Posterior vena cava (tissue), 2 donors: ENCODE measurements at regions of chr18 and their contacts with region 1.

Region 1: GRCh38 chr18:10519999-10520935 is 5.6 kb upstream of the NAPG start:
- DNase-seq: peak; percentile 95

Region 2: DNA sequence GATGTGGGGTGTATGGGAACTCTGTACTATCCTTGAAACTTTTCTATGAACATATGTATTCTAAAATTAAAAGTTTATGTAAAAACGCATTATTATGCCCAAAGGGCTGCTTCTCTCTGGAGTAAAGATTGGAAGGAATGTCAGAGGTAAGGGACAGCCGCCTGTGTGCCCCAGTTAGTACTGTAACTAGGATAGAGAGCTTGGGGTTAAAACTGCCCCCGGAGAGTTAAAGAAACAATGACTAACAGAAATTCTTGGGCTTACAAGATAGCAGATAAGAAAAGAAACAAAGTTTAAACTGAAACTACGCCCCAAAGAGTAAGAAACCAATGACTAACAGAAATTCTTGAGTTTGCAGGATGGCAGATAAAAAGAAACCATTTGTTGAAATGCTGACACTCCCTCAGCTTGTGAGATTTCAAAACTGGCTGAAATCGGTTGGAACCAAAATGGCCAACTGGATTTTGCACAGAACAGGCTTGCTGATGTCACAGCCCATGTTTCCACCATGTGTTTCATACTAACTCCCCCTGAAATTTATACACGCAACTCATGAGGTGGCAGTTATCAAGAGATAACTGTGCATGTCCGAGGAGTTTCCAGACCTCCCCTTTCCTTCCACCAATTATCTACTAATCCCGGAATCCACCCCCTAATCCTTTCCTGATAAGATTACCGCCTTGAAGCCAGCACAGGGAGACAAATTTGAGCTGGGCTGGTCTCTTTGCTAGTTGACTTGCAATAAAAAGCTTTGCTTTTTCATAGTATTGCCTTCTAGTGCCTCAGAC is 643.2 kb before region 1 on chr18:
- intact Hi-C with region 1: no loop called
- DNase-seq: no peak

Region 3: DNA sequence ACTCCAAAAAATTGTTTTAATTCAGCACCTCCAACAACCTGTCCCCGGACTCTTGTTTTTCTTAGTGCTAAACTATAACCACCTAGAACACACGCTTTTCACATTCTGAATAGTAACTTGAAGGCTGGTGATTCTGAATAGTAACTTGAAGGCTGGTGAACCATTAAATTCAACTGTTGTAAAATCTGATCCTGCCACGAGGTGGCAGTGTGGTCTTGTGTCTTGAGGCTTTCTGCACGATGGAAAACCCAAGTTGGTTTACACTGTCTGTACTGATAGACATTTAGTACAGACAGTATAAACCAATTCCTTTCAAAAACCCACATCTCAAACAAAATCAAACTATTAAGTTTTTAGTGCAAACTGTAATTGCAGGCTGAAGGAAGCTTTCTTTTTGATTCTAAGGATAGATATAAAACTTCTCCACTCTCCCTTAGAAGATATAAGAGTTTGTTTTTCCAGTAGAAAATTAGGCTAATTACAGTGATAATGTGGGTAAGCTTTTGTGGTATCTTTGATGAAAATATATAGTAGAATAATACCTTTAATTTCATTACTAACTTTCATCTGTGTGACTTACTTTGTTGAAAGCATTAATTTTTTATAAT is 548.9 kb before region 1 on chr18:
- intact Hi-C with region 1: loop called (anchors 2 to 10 kb)
- DNase-seq: no peak

Region 4: GRCh38 chr18:10006311-10006893 is 513.9 kb before region 1 on chr18:
- intact Hi-C with region 1: loop called in 1 of 2 experiments (anchors 10 kb)
- DNase-seq: no peak

Region 5: GRCh38 chr18:10121786-10122542 is 398.3 kb before region 1 on chr18:
- intact Hi-C with region 1: loop called in 1 of 2 experiments (anchors 10 kb)
- DNase-seq: no peak